Activated CD8-positive, alpha-beta T cell treated with anti-CD3 and anti-CD28 coated beads for 36 hours (primary cell): ENCODE measurements at regions of chr10 and their contacts with region 1.

Region 1: DNA sequence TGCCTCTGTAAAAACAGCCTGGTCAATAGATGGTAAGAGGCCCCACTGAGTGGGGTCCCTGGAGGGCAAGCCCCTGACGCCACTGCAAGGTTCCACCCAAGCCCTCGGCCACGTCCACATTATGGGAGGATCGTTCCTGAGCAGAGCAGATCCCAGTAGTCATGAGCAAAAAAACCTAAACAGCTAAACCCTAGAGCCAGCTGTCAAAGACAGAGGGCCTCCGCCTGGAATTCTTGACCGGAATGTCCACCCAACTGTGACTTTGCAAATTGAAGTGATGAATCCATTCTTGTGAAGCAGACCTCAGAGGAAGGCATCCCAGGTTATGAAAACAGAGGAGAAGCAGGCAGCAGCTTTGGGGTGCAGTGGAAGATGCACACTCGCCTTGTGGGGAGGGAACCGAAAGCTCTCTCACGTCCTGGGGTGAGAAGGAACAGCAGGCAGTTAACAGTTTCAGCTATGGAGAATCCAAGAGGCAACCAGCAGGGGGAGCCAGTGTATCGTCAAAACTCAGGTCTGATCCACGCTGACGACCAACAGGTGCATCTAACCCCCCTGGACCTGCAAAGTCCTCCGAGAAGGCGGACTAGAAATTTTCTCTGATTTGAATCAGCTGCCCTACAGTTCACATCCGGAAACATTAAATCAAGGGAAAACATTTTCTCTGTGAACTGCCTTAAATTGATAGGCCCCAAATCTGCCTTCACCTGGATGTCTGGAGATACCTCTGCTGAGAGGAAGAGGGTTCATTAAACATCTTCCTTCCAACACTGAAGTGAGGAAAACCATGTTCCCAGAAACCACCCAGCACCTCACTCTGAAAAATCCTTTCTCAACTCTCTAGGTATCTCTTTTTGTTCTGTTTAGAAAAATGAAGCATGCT is 139.1 kb upstream of the PFKP start:
- DNase-seq: peak; percentile 86
- ATAC-seq: peak; percentile 62
- H3K4me3 Mint-ChIP-seq: no peak overlapping the region
- H3K27ac Mint-ChIP-seq: no peak overlapping the region
- H3K4me1 Mint-ChIP-seq: peaks cover 3% of the 10 kb centered on the region
- H3K27me3 Mint-ChIP-seq: peaks cover 21% of the 10 kb centered on the region
- CTCF ChIP-seq: peak; percentile 70

Region 2: GRCh38 chr10:2592360-2593160 is 335.6 kb before region 1 on chr10:
- CTCF ChIA-PET with region 1: no interaction called
- POLR2A ChIA-PET with region 1: no interaction called
- intact Hi-C with region 1: no loop called
- DNase-seq: no peak
- ATAC-seq: no peak
- H3K4me3 Mint-ChIP-seq: no peak overlapping the region
- H3K27ac Mint-ChIP-seq: no peak overlapping the region
- H3K4me1 Mint-ChIP-seq: no peaks in the 10 kb centered on the region
- H3K27me3 Mint-ChIP-seq: peaks cover 9% of the 10 kb centered on the region
- CTCF ChIP-seq: no peak

Region 3: DNA sequence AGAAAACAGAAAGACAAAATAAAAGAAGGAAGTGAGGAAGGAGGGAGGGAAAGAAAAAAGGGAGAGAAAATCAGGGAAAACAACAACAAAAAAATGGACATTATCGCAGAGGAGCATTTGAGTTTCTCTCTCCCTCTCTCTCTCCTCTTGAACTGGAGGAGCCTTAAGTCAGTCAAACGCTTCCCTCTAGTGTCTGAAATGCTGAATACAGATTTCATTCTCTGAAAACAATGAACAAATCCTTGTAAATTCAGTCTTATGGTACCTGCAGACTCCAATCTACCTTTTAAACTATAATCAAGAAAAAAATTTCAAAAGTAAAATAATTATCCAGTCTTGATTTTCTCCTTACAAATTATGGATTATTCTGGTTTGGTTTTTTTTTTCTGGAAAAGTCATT is 49.9 kb after region 1 on chr10:
- CTCF ChIA-PET with region 1: interaction called, 6 read pairs
- POLR2A ChIA-PET with region 1: no interaction called
- intact Hi-C with region 1: loop called (anchors 5 kb)
- DNase-seq: no peak
- ATAC-seq: peak; percentile 60
- H3K4me3 Mint-ChIP-seq: no peak overlapping the region
- H3K27ac Mint-ChIP-seq: no peak overlapping the region
- H3K4me1 Mint-ChIP-seq: no peaks in the 10 kb centered on the region
- H3K27me3 Mint-ChIP-seq: peaks cover 2% of the 10 kb centered on the region
- CTCF ChIP-seq: peak; percentile 37

Region 4: DNA sequence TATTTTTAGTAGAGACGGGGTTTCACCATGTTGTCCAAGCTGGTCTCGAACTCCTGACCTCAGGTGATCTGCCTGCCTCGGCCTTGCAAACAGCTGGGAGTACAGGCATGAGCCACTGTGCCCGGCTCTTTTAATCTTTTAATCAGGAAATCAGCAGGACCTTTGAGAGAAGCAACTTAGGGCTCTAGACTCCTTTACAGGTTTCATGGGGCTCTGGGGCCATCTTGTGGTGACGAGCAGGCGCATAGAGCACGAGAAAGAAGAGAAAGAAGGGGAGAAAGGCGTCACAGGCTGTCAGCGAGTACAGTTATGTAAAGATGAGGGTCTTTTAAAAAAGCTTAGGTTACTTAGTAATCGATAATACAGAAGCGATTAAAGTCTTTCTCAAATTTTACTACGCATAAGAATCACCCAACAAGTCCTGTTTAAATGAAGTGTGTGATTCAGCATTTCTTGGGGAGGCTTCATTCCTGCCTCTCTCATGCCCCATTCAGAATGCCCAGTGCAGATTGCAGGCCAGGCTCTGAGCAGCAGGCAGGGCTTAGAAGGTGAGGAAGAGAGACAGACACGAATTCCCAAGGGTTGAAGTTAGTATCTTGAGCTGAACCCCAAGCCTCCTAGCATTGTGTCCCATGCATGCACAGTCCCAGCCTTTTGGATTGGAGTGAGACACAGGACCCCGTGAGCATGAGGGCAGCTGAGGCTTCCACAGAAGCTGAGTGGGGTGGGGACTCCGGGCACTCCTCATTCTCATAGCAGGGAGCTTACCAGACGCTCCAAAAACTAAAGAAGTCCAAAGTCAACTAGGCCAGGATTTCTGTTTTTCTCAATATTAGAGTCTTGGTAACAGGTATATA is 115.5 kb after region 1 on chr10:
- CTCF ChIA-PET with region 1: interaction called, 35 read pairs
- POLR2A ChIA-PET with region 1: no interaction called
- intact Hi-C with region 1: loop called (anchors 5 kb)
- DNase-seq: peak; percentile 72
- ATAC-seq: peak; percentile 74
- H3K4me3 Mint-ChIP-seq: no peak overlapping the region
- H3K27ac Mint-ChIP-seq: no peak overlapping the region
- H3K4me1 Mint-ChIP-seq: no peaks in the 10 kb centered on the region
- H3K27me3 Mint-ChIP-seq: peaks cover 10% of the 10 kb centered on the region
- CTCF ChIP-seq: peak; percentile 65

Region 5: DNA sequence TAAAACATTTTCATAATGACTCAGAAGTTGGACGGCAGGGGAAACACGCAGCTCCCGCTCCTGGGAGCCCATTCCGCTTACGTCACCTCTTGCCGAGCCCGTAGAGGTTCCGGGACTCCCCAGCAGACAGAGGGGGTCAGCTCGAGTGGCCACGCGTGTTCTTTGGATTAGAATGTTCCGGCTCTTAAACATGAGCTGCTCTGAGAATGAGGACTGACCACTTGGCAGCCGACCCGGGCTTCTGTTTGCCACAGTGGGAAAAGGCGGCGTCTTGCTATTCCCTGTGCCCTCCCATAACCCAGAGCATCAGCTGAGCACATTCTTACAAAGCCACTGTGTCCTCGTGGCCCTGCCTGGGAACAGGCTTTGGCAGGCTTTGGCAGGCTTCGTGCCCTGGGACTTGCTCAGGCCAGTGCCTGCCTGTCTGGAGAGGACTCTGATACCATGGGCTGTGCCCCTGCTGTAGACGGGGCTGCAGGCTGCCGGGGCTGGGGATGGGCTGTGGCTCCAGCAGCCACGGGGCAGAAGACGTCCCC is 179.3 kb after region 1 on chr10:
- CTCF ChIA-PET with region 1: no interaction called
- POLR2A ChIA-PET with region 1: no interaction called
- intact Hi-C with region 1: no loop called
- DNase-seq: no peak
- ATAC-seq: no peak
- H3K4me3 Mint-ChIP-seq: no peak overlapping the region
- H3K27ac Mint-ChIP-seq: no peak overlapping the region
- H3K4me1 Mint-ChIP-seq: no peaks in the 10 kb centered on the region
- H3K27me3 Mint-ChIP-seq: no peaks in the 10 kb centered on the region
- CTCF ChIP-seq: no peak